ENCODE measurements at regions of chr11 and their contacts with region 1.

Region 1: DNA sequence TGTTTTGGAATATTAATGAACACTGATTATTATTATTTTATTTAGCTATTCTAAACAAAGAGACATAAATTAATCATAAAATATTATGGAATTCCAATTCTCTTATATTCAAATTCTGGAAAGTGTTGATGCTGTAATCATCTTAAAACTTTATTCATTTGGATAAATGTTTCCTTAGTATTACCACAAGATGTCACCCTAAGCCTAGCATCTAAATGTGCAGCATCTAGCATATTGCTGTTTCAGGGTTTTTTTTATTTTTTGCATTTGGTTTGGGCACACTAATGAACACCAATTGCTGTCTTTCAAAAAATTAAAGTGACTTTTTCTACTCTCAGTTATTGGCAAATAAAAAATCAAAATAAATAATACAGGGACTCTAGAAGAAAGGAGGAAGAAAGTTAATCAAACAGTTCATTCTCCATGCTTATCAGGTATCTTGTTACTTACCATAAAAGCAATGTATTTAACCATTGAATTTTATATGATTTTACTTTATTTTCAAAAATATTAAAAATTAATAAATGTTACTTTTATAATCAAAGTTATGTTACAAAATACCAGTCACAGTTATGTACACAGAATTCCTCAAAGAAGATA is 31.8 kb downstream of the DLG2 start:
- DNase-seq: peak; percentile 38
- ATAC-seq: peak; percentile 38; the same call in 1 of the 3 replicates
- H3K4me3 ChIP-seq: no peak overlapping the region
- H3K27ac ChIP-seq: no peak overlapping the region
- H3K4me1 ChIP-seq: no peaks in the 10 kb centered on the region
- H3K27me3 ChIP-seq: no peaks in the 10 kb centered on the region
- CTCF ChIP-seq: peak; percentile 67
- EP300 ChIP-seq: no peak
- POLR2A ChIP-seq: no peak
- RAD21 ChIP-seq: peak; percentile 32; the same call in 1 of the 2 replicates

Region 2: DNA sequence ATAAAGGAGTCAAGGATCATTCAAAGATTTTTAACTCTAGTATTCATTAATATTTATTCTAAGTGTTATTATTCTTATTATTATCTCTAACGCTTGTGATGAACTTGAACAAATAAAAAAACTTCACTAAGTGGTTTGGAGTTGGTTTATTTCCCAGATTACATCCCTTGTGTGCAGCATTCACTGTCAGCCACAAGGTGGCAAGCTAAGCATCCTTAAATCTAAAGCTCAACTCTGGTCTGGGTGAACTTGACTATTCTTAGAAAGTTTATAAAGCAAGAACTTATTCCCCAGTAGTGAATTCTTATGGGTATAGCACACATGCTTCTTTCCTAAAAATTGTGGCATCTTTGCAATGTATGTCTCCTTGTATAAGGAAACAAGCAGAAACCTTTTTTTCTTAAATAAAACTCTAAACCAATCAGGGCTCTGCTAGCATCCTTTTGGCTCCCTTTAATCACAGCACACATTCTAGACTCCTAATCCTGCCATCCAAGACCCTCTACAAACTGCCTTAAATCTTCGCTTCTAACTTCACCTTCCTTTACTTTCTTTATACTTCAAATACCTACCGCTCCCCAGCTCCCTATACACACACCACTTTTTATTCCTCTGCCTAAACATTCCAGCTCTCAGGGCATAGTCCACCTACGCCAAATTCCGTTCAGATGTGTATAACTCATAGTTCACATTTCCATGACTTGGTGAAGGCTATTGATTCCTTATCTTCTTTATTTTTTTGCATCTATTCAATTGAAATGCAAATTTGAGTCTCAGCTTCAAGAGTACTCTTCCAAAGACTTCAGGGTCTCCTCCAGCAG is 1037.1 kb before region 1 on chr11:
- CTCF ChIA-PET with region 1: interaction called, 3 read pairs
- POLR2A ChIA-PET with region 1: no interaction called
- in situ Hi-C with region 1: no loop called
- intact Hi-C with region 1: loop called (anchors 2 kb)
- DNase-seq: peak; percentile 80
- ATAC-seq: peak; percentile 99
- H3K4me3 ChIP-seq: no peak overlapping the region
- H3K27ac ChIP-seq: no peak overlapping the region
- H3K4me1 ChIP-seq: peaks cover 12% of the 10 kb centered on the region
- H3K27me3 ChIP-seq: no peaks in the 10 kb centered on the region
- CTCF ChIP-seq: peak; percentile 76
- EP300 ChIP-seq: no peak
- POLR2A ChIP-seq: no peak
- RAD21 ChIP-seq: peak; percentile 60

Region 3: DNA sequence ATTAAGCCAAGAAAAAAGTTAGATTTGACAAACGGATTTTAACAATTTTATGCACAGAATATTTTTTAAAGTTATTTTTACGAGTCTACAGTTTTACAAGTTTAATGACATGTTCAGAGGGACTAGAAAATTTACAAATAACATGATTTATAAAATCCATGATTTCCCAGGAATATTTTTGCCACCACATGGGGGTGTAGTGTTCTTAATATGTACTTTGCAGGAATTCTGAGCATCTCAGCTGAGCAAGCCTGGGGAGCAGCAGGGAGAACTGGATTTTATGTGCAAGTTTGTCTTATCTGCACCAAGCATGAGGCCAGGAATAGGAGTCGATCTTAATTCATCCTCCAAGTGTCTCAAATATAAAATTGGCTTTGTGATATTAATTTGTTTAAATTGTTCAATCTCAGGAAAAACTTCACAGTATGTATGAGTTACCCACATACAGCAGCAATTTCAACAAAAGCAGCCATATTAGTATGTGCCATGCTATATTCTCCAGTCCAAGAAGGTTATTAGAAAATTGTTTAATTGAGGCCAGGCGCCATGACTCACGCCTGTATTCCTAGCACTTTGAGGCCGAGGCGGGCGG is 794.5 kb before region 1 on chr11:
- CTCF ChIA-PET with region 1: no interaction called
- POLR2A ChIA-PET with region 1: no interaction called
- in situ Hi-C with region 1: loop called (anchors 25 kb)
- intact Hi-C with region 1: loop called (anchors 2 kb)
- DNase-seq: peak; percentile 13
- ATAC-seq: peak; percentile 61; the same call in 2 of the 3 replicates
- H3K4me3 ChIP-seq: no peak overlapping the region
- H3K27ac ChIP-seq: no peak overlapping the region
- H3K4me1 ChIP-seq: no peaks in the 10 kb centered on the region
- H3K27me3 ChIP-seq: no peaks in the 10 kb centered on the region
- CTCF ChIP-seq: 0 out of 2 replicates have a peak, but pooled peaks have one; percentile 11
- EP300 ChIP-seq: no peak
- POLR2A ChIP-seq: no peak
- RAD21 ChIP-seq: no peak

Region 4: DNA sequence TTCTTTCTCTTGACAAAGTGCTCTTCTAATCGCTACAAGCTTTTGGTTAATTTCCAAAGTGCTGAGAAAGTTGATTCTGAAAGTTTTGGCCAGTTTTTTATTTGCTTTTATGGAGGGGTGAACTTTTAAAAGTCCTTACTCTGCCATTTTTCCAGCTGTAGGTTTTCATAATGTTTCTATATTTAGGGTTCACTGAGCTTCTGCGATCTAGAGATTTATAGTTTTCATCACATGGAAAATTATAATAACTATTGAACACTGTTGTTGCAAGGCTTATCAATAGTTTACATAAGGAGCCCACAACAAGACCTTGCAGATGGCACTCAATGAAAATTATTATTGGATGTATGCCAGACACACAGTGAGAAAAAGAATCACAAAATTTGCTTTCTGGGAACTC is 23.3 kb before region 1 on chr11:
- CTCF ChIA-PET with region 1: no interaction called
- POLR2A ChIA-PET with region 1: no interaction called
- in situ Hi-C with region 1: no loop called
- intact Hi-C with region 1: no loop called
- DNase-seq: no peak
- ATAC-seq: no peak
- H3K4me3 ChIP-seq: no peak overlapping the region
- H3K27ac ChIP-seq: no peak overlapping the region
- H3K4me1 ChIP-seq: no peaks in the 10 kb centered on the region
- H3K27me3 ChIP-seq: no peaks in the 10 kb centered on the region
- CTCF ChIP-seq: no peak
- EP300 ChIP-seq: no peak
- POLR2A ChIP-seq: no peak
- RAD21 ChIP-seq: no peak

Region 5: GRCh38 chr11:85682330-85683305 is 87.2 kb after region 1 on chr11:
- CTCF ChIA-PET with region 1: no interaction called
- POLR2A ChIA-PET with region 1: no interaction called
- in situ Hi-C with region 1: no loop called
- intact Hi-C with region 1: no loop called
- DNase-seq: no peak
- ATAC-seq: peak; percentile 44
- H3K4me3 ChIP-seq: peak overlapping the region; percentile 54 to 69 (median 64); a peak in 5 of 6 replicates
- H3K27ac ChIP-seq: no peak overlapping the region
- H3K4me1 ChIP-seq: peaks cover 33% of the 10 kb centered on the region; the same call in 1 of the 2 replicates
- H3K27me3 ChIP-seq: peaks cover 0 to 10% of the 10 kb centered on the region in 2 experiments; a peak in 1 of 5 replicates
- CTCF ChIP-seq: no peak
- EP300 ChIP-seq: no peak
- POLR2A ChIP-seq: peak in 1 of 2 experiments; percentile 44; a peak in 1 of 4 replicates
- RAD21 ChIP-seq: no peak

Region 6: GRCh38 chr11:85826116-85826855 is 230.9 kb after region 1 on chr11:
- CTCF ChIA-PET with region 1: interaction called, 8 read pairs
- POLR2A ChIA-PET with region 1: no interaction called
- in situ Hi-C with region 1: loop called (anchors 10 kb)
- intact Hi-C with region 1: loop called (anchors 1 kb)
- DNase-seq: no peak
- ATAC-seq: peak; percentile 94
- H3K4me3 ChIP-seq: no peak overlapping the region
- H3K27ac ChIP-seq: no peak overlapping the region
- H3K4me1 ChIP-seq: no peaks in the 10 kb centered on the region
- H3K27me3 ChIP-seq: 0 out of 5 replicates have a peak, but pooled peaks cover 0 to 4% of the 10 kb centered on the region in 2 experiments
- CTCF ChIP-seq: peak; percentile 38; the same call in 1 of the 2 replicates
- EP300 ChIP-seq: no peak
- POLR2A ChIP-seq: no peak
- RAD21 ChIP-seq: no peak

Region 7: GRCh38 chr11:86291466-86292262 is 696.3 kb after region 1 on chr11:
- CTCF ChIA-PET with region 1: no interaction called
- POLR2A ChIA-PET with region 1: no interaction called
- in situ Hi-C with region 1: no loop called
- intact Hi-C with region 1: loop called (anchors 2 kb)
- DNase-seq: peak; percentile 70
- ATAC-seq: peak; percentile 91
- H3K4me3 ChIP-seq: no peak overlapping the region
- H3K27ac ChIP-seq: no peak overlapping the region
- H3K4me1 ChIP-seq: peaks cover 16% of the 10 kb centered on the region
- H3K27me3 ChIP-seq: no peaks in the 10 kb centered on the region
- CTCF ChIP-seq: peak; percentile 63
- EP300 ChIP-seq: 0 out of 4 replicates have a peak, but pooled peaks of 1 of the 2 experiments have one; percentile 12
- POLR2A ChIP-seq: no peak
- RAD21 ChIP-seq: peak; percentile 16; the same call in 1 of the 2 replicates